ENCODE measurements at regions of chr15 and their contacts with region 1.

Region 1: GRCh38 chr15:84883916-84884768 is at the start of gene SLC28A1:
- H3K4me3 ChIP-seq: no peak within 1 kb of the TSS
- H3K27ac ChIP-seq: no peak within 1 kb of the TSS
- H3K4me1 ChIP-seq: no peaks in the 10 kb centered on the region
- CTCF ChIP-seq: no peak

Region 2: DNA sequence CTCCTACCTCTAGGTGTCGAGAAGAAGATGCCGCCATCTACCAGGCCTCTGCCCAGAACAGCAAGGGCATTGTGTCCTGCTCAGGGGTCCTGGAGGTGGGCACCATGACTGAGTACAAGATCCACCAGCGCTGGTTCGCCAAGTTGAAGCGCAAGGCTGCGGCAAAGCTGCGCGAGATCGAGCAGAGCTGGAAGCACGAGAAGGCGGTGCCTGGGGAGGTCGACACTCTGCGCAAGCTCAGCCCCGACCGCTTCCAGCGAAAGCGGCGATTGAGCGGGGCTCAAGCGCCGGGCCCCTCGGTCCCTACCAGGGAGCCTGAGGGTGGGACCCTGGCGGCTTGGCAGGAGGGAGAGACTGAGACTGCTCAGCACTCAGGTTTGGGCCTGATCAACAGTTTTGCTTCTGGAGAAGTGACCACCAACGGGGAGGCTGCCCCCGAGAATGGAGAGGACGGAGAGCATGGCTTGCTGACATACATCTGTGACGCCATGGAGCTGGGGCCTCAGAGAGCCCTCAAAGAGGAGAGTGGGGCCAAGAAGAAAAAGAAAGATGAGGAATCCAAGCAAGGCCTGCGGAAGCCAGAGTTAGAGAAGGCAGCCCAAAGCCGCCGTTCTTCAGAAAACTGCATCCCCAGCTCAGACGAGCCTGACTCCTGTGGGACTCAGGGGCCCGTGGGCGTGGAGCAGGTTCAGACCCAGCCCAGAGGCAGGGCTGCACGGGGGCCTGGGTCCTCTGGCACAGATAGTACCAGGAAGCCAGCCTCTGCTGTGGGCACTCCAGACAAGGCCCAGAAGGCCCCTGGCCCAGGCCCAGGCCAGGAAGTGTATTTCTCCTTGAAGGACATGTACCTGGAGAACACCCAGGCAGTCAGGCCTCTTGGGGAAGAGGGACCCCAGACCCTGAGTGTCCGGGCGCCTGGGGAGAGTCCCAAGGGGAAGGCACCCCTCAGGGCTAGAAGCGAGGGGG is 44.2 kb before region 1 on chr15:
- CTCF ChIA-PET with region 1: interaction called, 20 read pairs
- POLR2A ChIA-PET with region 1: interaction called, 5 read pairs
- H3K4me3 ChIP-seq: no peak overlapping the region
- H3K27ac ChIP-seq: no peak overlapping the region
- H3K4me1 ChIP-seq: no peaks in the 10 kb centered on the region
- CTCF ChIP-seq: no peak

Measured in HEK293 (cell line).